CD14-positive monocyte (primary cell): ENCODE measurements at regions of chr3 and their contacts with region 1.

Region 1: GRCh38 chr3:53140847-53141845 is 10.9 kb upstream of the RFT1 start:
- DNase-seq: peak; percentile 86 to 98 (median 95)
- H3K4me3 ChIP-seq: peak overlapping the region in 1 of 3 experiments; percentile 56
- H3K4me3 Mint-ChIP-seq: peak overlapping the region in 1 of 2 donors; percentile 59
- H3K27ac ChIP-seq: peak overlapping the region; percentile 78 to 91
- H3K27ac Mint-ChIP-seq: peak overlapping the region; percentile 87 to 99 (median 95)
- H3K4me1 ChIP-seq: peaks cover 57 to 60% of the 10 kb centered on the region in 2 donors
- H3K4me1 Mint-ChIP-seq: peaks cover 65% of the 10 kb centered on the region
- H3K27me3 ChIP-seq: no peaks in the 10 kb centered on the region
- H3K27me3 Mint-ChIP-seq: no peaks in the 10 kb centered on the region
- CTCF ChIP-seq: no peak

Region 2: GRCh38 chr3:52897130-52898122 is 243.7 kb before region 1 on chr3 and contains the start of gene STIMATE:
- intact Hi-C with region 1: no loop called
- DNase-seq: peak; percentile 66 to 75 (median 67)
- H3K4me3 ChIP-seq: peak within 1 kb of the TSS; percentile 72 to 91 (median 81)
- H3K4me3 Mint-ChIP-seq: peak within 1 kb of the TSS; percentile 95 to 97
- H3K27ac ChIP-seq: peak within 1 kb of the TSS in 1 of 2 donors; percentile 74
- H3K27ac Mint-ChIP-seq: peak within 1 kb of the TSS; percentile 78 to 93 (median 85)
- H3K4me1 ChIP-seq: peaks cover 46 to 57% of the 10 kb centered on the region in 2 donors
- H3K4me1 Mint-ChIP-seq: peaks cover 51% of the 10 kb centered on the region
- H3K27me3 ChIP-seq: no peaks in the 10 kb centered on the region
- H3K27me3 Mint-ChIP-seq: peaks cover 0 to 3% (median 1%) of the 10 kb centered on the region in 3 donors
- CTCF ChIP-seq: no peak
- polyA plus RNA-seq, gene STIMATE: 8.9 to 49.9 (median 11.7) TPM

Region 3: DNA sequence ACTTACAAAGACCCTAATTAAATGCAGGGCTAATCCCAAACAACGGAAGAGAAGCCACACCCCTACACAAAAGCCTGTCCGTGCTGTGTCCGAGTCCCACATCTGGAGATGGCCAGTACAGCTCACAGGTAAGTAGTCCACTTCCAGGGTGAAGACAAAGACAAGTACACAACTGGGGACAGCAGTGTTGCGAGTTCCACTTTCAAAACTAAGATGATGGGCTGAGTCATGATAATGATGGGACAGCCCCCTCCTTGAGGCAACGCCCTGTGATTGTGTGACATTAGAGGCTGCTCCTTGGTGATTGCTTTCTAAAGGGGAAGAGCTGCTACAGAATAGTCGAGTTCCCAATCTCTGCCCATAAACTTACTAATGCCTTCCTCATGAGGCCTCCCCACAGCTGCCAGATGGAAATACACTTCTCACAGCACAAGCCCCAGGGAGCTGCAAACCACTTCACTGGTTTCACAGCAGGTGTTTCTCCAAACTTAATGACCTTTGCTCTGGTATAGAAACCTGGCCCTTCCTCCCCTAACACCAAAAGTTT is 38.5 kb before region 1 on chr3:
- intact Hi-C with region 1: loop called in 1 of 2 experiments (anchors 5 kb)
- DNase-seq: peak; percentile 83 to 92 (median 91)
- H3K4me3 ChIP-seq: peak overlapping the region in 1 of 3 experiments; percentile 35
- H3K4me3 Mint-ChIP-seq: peak overlapping the region in 1 of 2 donors; percentile 23
- H3K27ac ChIP-seq: peak overlapping the region; percentile 66 to 81
- H3K27ac Mint-ChIP-seq: peak overlapping the region; percentile 90 to 98 (median 94)
- H3K4me1 ChIP-seq: peaks cover 37 to 39% of the 10 kb centered on the region in 2 donors
- H3K4me1 Mint-ChIP-seq: peaks cover 43% of the 10 kb centered on the region
- H3K27me3 ChIP-seq: no peaks in the 10 kb centered on the region
- H3K27me3 Mint-ChIP-seq: peaks cover 0 to 2% (median 0%) of the 10 kb centered on the region in 3 donors
- CTCF ChIP-seq: no peak